ENCODE measurements at regions of chr11 and their contacts with region 1.

Region 1: GRCh38 chr11:66408488-66409214 is 12.2 kb upstream of the NPAS4 start:
- H3K4me3 ChIP-seq: peak overlapping the region; percentile 22
- H3K27ac ChIP-seq: no peak overlapping the region
- H3K4me1 ChIP-seq: no peaks in the 10 kb centered on the region
- CTCF ChIP-seq: peak; percentile 96

Region 2: GRCh38 chr11:66421492-66422205 is 13.0 kb after region 1 on chr11:
- CTCF ChIA-PET with region 1: interaction called, 79 read pairs
- POLR2A ChIA-PET with region 1: interaction called, 7 read pairs
- H3K4me3 ChIP-seq: no peak overlapping the region
- H3K27ac ChIP-seq: no peak overlapping the region
- H3K4me1 ChIP-seq: no peaks in the 10 kb centered on the region
- CTCF ChIP-seq: no peak

Region 3: DNA sequence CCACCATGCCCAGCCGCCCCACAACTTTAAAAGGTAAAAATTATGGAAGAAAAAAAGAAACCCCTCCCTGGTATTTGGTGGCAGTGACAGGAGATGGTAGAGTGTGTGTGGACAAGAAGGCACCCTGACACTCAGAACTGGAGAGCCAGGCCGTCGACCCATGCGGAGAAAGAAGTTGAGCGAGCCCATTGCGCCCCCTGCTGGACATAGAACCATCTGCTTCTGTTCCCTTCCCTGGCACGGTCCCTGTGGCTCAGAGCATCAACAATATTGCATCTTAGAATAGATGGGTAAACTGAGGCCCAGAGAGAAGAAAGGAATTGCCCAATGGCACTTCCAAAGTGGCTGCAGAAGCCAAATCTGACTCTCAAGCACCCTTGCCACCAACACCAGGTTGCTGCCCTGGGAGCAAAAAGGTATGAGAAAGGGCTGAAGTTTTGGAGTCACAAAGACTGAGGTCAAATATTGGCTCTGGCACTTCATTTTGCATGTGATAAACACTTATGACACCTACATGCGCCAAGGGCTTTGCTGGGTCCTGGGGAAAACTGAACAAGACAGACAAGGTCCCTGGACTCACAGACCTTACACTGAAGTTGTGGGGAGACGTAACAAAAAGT is 21.4 kb after region 1 on chr11:
- CTCF ChIA-PET with region 1: interaction called, 79 read pairs
- POLR2A ChIA-PET with region 1: interaction called, 4 read pairs
- H3K4me3 ChIP-seq: no peak overlapping the region
- H3K27ac ChIP-seq: no peak overlapping the region
- H3K4me1 ChIP-seq: no peaks in the 10 kb centered on the region
- CTCF ChIP-seq: peak; percentile 58

Region 4: GRCh38 chr11:66638177-66639065 is 229.8 kb after region 1 on chr11 and contains the start of gene RBM4:
- CTCF ChIA-PET with region 1: no interaction called
- POLR2A ChIA-PET with region 1: no interaction called
- H3K4me3 ChIP-seq: peak within 1 kb of the TSS; percentile 62
- H3K27ac ChIP-seq: peak within 1 kb of the TSS; percentile 77
- H3K4me1 ChIP-seq: no peaks in the 10 kb centered on the region; the same call in 1 of the 2 replicates
- CTCF ChIP-seq: peak; percentile 84

Measured in HEK293 (cell line).